HEK293 (cell line): ENCODE measurements at regions of chr7 and their contacts with region 1.

Region 1: GRCh38 chr7:149662591-149663095 is 110.7 kb downstream of the ZNF467 start:
- H3K4me3 ChIP-seq: no peak overlapping the region
- H3K27ac ChIP-seq: no peak overlapping the region
- H3K4me1 ChIP-seq: no peaks in the 10 kb centered on the region
- CTCF ChIP-seq: peak; percentile 69

Region 2: GRCh38 chr7:149444287-149444686 is 218.4 kb before region 1 on chr7:
- CTCF ChIA-PET with region 1: no interaction called
- POLR2A ChIA-PET with region 1: no interaction called
- H3K4me3 ChIP-seq: no peak overlapping the region
- H3K27ac ChIP-seq: no peak overlapping the region
- H3K4me1 ChIP-seq: no peaks in the 10 kb centered on the region
- CTCF ChIP-seq: no peak

Region 3: DNA sequence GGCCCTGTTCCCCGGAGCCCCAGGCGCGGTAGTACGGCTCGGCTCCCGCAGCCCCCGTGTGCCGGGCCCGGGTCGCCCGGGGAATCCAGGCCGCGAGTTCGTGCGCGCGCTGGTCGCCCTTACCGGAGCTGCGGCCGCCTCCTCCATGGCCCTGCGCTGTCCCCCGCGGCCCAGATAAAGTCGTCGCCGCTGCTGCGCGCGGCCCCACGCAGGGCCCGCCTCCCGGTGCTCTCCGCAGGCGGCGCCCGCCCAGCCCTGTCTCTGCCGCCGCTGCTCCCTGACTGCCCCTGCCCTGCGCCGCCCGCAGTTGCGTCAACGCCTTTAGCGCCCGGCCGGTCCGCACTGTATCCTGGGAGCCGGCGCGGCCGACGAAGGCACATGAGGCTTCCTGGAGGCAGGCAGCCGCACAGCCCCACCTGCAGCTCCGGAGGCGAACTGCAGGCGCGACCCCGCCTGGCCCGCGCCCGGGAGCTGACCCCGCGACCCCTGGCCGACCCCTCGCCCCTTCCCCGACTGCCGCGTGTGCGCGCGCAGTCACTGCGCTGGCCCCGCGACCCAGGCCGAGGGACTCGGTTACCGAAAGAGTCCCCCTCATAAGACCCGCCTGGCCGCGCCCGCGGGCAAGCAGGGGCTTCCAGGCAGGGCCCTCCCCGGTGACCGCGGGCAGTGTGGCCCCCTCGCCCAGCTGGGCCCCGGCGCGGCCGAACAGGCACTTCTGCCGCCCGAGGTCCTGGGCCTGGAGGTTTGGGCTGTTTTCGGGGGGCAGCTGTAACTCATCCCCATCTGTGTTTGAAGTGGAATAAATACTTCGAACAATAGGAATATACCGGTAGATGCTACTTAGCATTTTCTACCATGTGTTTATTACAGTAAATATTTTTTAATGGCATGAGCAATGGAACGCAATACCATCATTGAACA is 38.0 kb before region 1 on chr7:
- CTCF ChIA-PET with region 1: interaction called, 11 read pairs
- POLR2A ChIA-PET with region 1: no interaction called
- H3K4me3 ChIP-seq: peak overlapping the region; percentile 60
- H3K27ac ChIP-seq: peak overlapping the region; percentile 69
- H3K4me1 ChIP-seq: peaks cover 3% of the 10 kb centered on the region; the same call in 1 of the 2 replicates
- CTCF ChIP-seq: peak; percentile 87

Region 4: GRCh38 chr7:149680331-149681025 is 17.8 kb after region 1 on chr7:
- CTCF ChIA-PET with region 1: interaction called, 25 read pairs
- POLR2A ChIA-PET with region 1: no interaction called
- H3K4me3 ChIP-seq: no peak overlapping the region
- H3K27ac ChIP-seq: no peak overlapping the region
- H3K4me1 ChIP-seq: no peaks in the 10 kb centered on the region
- CTCF ChIP-seq: no peak

Region 5: GRCh38 chr7:149707448-149707886 is 44.8 kb after region 1 on chr7:
- CTCF ChIA-PET with region 1: interaction called, 20 read pairs
- POLR2A ChIA-PET with region 1: no interaction called
- H3K4me3 ChIP-seq: no peak overlapping the region
- H3K27ac ChIP-seq: no peak overlapping the region
- H3K4me1 ChIP-seq: no peaks in the 10 kb centered on the region
- CTCF ChIP-seq: no peak

Region 6: GRCh38 chr7:149736478-149737360 is 74.1 kb after region 1 on chr7:
- CTCF ChIA-PET with region 1: interaction called, 104 read pairs
- POLR2A ChIA-PET with region 1: interaction called, 5 read pairs
- H3K4me3 ChIP-seq: no peak overlapping the region
- H3K27ac ChIP-seq: no peak overlapping the region
- H3K4me1 ChIP-seq: no peaks in the 10 kb centered on the region
- CTCF ChIP-seq: no peak

Region 7: GRCh38 chr7:149753401-149754233 is 91.0 kb after region 1 on chr7:
- CTCF ChIA-PET with region 1: interaction called, 25 read pairs
- POLR2A ChIA-PET with region 1: no interaction called
- H3K4me3 ChIP-seq: no peak overlapping the region
- H3K27ac ChIP-seq: no peak overlapping the region
- H3K4me1 ChIP-seq: no peaks in the 10 kb centered on the region
- CTCF ChIP-seq: peak; percentile 61

Region 8: DNA sequence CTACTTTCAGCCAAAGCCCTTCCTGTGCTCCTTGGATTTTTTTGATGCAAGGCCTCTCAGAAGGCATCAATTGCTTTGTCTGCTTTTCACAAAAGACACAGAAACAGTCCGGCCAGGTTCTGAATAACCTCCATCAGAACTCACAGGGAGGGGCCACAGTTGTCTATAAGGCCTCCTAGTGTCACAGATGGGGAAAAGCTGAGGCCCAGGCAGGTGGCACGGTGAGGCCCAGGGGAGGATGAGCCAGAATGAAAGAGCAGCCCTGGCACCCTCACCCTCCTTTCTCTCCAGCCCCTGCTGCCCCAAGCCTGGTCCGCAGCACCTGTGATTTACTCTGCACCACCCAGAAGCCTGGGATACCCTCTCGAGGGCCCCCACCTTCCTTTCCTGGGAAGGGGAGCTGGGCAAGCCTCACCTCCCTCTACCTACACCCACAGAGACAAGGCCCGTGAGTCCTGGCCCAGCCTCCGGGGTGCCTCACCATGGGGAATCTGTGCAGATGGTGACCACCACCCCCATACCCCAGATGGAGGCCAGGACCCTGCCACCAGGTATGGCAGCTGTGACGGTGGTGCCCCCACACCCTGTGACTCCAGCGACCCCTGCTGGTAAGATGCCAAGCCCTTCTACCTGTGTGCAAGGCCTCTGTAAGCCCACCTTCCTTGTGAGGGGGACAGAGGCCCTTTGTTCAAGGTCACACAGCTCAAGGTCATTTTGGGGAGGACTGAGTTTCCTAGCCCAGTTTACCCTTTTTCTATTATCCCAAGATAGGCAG is 136.9 kb after region 1 on chr7:
- CTCF ChIA-PET with region 1: interaction called, 11 read pairs
- POLR2A ChIA-PET with region 1: no interaction called
- H3K4me3 ChIP-seq: no peak overlapping the region
- H3K27ac ChIP-seq: no peak overlapping the region
- H3K4me1 ChIP-seq: no peaks in the 10 kb centered on the region
- CTCF ChIP-seq: peak; percentile 64